ENCODE measurements at regions of chr1 and their contacts with region 1.

Region 1: GRCh38 chr1:63615768-63616420 is 22.7 kb downstream of the PGM1 start:
- DNase-seq: peak; percentile 82
- H3K4me3 Mint-ChIP-seq: no peak overlapping the region
- H3K27ac Mint-ChIP-seq: no peak overlapping the region
- H3K4me1 Mint-ChIP-seq: peaks cover 24% of the 10 kb centered on the region
- H3K27me3 Mint-ChIP-seq: no peaks in the 10 kb centered on the region
- CTCF ChIP-seq: peak; percentile 72

Region 2: GRCh38 chr1:63643926-63644325 is 28.0 kb after region 1 on chr1:
- CTCF ChIA-PET with region 1: no interaction called
- POLR2A ChIA-PET with region 1: no interaction called
- intact Hi-C with region 1: no loop called
- DNase-seq: no peak
- H3K4me3 Mint-ChIP-seq: no peak overlapping the region
- H3K27ac Mint-ChIP-seq: peak overlapping the region; percentile 21
- H3K4me1 Mint-ChIP-seq: no peaks in the 10 kb centered on the region
- H3K27me3 Mint-ChIP-seq: no peaks in the 10 kb centered on the region
- CTCF ChIP-seq: no peak

Region 3: DNA sequence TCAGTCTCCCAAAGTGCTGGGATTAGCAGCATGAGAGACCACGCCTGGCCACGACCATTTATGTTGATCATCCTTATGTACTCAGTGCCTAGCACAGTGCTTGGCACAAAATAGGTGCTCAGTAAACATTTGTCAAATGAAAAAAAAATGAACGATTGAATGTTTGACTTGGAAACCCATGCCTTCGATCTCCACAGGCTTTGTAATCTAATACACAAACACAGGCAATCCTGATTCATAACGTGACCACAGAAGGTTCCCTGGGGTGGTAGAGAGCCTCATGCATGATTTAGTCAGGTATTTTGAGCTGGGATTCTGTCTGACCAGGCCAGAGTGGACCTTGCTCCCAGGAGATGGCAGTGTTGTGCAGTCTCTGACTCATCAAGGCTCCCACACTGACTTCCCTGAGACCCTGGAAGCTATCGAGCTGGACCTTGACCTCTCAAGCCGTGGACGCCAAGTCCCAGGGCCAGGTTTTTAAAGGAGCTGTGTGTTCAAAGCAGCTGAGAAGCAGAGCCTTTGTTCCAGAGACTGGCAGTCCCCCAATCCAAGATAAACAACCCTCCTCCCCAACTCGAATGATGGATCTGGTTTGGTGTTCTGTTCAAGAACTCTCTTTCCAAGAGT is 58.5 kb after region 1 on chr1:
- CTCF ChIA-PET with region 1: interaction called, 6 read pairs
- POLR2A ChIA-PET with region 1: no interaction called
- intact Hi-C with region 1: loop called (anchors 1 kb)
- DNase-seq: peak; percentile 90
- H3K4me3 Mint-ChIP-seq: no peak overlapping the region
- H3K27ac Mint-ChIP-seq: no peak overlapping the region
- H3K4me1 Mint-ChIP-seq: peaks cover 11% of the 10 kb centered on the region
- H3K27me3 Mint-ChIP-seq: no peaks in the 10 kb centered on the region
- CTCF ChIP-seq: peak; percentile 58

Region 4: GRCh38 chr1:63917571-63918417 is 301.9 kb after region 1 on chr1:
- CTCF ChIA-PET with region 1: interaction called, 4 read pairs
- POLR2A ChIA-PET with region 1: no interaction called
- intact Hi-C with region 1: loop called (anchors 5 kb)
- DNase-seq: peak; percentile 46
- H3K4me3 Mint-ChIP-seq: no peak overlapping the region
- H3K27ac Mint-ChIP-seq: no peak overlapping the region
- H3K4me1 Mint-ChIP-seq: peaks cover 16% of the 10 kb centered on the region
- H3K27me3 Mint-ChIP-seq: no peaks in the 10 kb centered on the region
- CTCF ChIP-seq: peak; percentile 12

Region 5: GRCh38 chr1:64163970-64164369 is 548.1 kb after region 1 on chr1:
- CTCF ChIA-PET with region 1: no interaction called
- POLR2A ChIA-PET with region 1: interaction called, 3 read pairs
- intact Hi-C with region 1: loop called (anchors 5 kb)
- DNase-seq: peak; percentile 30
- H3K4me3 Mint-ChIP-seq: no peak overlapping the region
- H3K27ac Mint-ChIP-seq: no peak overlapping the region
- H3K4me1 Mint-ChIP-seq: no peaks in the 10 kb centered on the region
- H3K27me3 Mint-ChIP-seq: no peaks in the 10 kb centered on the region
- CTCF ChIP-seq: peak; percentile 28